Activated CD4-positive, alpha-beta memory T cell treated with anti-CD3 and anti-CD28 coated beads, Interleukin-2, amount 10 ng/mL, durations not matched to agents 7 days and 5 days (primary cell): ENCODE measurements at regions of chr17 and their contacts with region 1.

Region 1: DNA sequence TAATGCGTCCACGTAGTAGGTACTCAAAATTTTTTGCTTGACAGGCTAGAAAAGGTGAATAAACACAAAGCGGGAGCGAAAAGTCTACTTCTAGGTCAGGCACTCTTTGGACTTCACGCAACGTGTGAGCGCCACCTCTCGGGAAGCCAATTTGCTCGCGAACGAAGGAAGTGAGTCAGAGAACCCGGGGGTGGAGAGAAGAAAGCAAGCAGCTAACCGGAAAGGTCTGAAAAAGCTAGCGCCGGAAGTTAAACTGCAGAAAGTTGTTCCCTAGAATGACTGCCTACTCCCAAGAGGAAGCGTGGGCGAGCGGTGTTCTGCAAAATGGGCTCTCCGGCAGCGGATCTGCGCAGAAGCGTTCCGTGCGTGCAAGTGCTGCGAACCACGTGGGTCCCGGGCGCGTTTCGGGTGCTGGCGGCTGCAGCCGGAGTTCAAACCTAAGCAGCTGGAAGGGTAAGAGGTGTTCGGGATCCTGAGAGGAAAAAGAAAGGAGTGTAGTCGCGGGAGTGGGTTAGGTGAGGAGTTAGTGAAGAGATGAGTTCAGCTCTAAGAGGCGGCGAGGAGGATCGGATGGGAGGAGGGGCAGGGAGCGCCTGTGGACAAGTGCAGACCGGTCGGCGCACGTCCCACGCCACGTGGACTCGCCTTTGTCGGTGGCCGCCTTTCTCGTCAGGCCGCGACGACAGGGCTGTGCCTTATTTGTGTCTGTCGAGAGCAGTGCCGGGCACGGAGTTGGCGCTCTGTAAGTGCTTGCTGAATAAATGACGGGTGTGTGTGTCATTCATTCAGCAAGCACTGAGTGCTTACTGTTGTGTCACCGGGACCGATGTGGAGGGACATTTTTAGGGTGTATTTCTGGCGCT is at the start of gene NME1:
- DNase-seq: peak; percentile 98
- H3K4me3 Mint-ChIP-seq: no peak within 1 kb of the TSS
- H3K27ac Mint-ChIP-seq: no peak within 1 kb of the TSS
- H3K4me1 Mint-ChIP-seq: peaks cover 10% of the 10 kb centered on the region
- H3K27me3 Mint-ChIP-seq: no peaks in the 10 kb centered on the region
- total RNA-seq, gene NME1: 87.9 to 90.8 TPM

Region 2: DNA sequence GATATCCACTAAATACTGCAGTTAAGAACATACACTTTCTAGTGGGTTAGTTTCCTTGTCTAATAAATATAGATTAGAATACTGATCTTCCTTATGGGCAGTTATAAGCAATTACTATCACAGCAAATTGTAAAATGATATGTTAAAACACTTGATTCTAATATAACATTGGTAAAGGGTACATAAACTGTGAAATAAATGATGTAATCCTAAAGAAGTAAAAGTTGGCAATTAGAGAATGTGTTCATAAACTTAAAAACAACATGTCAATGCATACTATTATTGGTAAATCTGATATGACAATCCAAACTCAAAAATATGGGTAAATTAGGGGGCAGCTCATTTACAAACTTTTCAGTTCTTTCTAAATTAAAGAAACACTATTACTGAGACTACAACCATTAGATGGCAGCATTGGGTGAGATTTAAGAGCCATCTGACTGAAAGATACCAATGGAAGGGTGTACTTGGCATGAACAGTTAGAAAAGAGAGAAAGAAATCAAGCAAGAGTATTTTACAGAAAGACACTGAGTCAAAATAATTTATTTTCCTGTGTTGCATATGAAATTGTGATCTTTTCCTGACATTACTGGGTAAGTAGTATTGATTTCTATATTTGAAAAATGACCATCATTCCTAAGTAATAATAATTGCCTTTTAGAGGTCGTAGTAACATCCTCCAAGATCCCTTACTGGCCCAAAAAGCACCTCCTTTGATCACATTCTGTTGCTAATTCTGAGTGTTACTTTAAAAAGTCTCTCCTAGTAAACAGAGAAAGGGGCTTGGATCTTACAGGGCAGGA is 152.4 kb before region 1 on chr17:
- CTCF ChIA-PET with region 1: interaction called, 103 read pairs
- POLR2A ChIA-PET with region 1: interaction called, 18 read pairs
- DNase-seq: no peak
- H3K4me3 Mint-ChIP-seq: no peak overlapping the region
- H3K27ac Mint-ChIP-seq: no peak overlapping the region
- H3K4me1 Mint-ChIP-seq: no peaks in the 10 kb centered on the region
- H3K27me3 Mint-ChIP-seq: no peaks in the 10 kb centered on the region

Region 3: GRCh38 chr17:51015145-51015558 is 138.3 kb before region 1 on chr17:
- CTCF ChIA-PET with region 1: interaction called, 10 read pairs
- POLR2A ChIA-PET with region 1: interaction called, 3 read pairs
- DNase-seq: no peak
- H3K4me3 Mint-ChIP-seq: no peak overlapping the region
- H3K27ac Mint-ChIP-seq: no peak overlapping the region
- H3K4me1 Mint-ChIP-seq: peaks cover 3% of the 10 kb centered on the region
- H3K27me3 Mint-ChIP-seq: no peaks in the 10 kb centered on the region

Region 4: GRCh38 chr17:51166197-51166986 is 13.0 kb after region 1 on chr17 and contains the start of gene NME2:
- CTCF ChIA-PET with region 1: interaction called, 13 read pairs
- POLR2A ChIA-PET with region 1: interaction called, 69 read pairs
- DNase-seq: peak; percentile 73
- H3K4me3 Mint-ChIP-seq: peak within 1 kb of the TSS; percentile 89
- H3K27ac Mint-ChIP-seq: peak within 1 kb of the TSS; percentile 93
- H3K4me1 Mint-ChIP-seq: peaks cover 39% of the 10 kb centered on the region
- H3K27me3 Mint-ChIP-seq: no peaks in the 10 kb centered on the region
- total RNA-seq, gene NME2: 364 to 374 TPM